GM10248 (cell line): ENCODE measurements at regions of chr22 and their contacts with region 1.

Region 1: DNA sequence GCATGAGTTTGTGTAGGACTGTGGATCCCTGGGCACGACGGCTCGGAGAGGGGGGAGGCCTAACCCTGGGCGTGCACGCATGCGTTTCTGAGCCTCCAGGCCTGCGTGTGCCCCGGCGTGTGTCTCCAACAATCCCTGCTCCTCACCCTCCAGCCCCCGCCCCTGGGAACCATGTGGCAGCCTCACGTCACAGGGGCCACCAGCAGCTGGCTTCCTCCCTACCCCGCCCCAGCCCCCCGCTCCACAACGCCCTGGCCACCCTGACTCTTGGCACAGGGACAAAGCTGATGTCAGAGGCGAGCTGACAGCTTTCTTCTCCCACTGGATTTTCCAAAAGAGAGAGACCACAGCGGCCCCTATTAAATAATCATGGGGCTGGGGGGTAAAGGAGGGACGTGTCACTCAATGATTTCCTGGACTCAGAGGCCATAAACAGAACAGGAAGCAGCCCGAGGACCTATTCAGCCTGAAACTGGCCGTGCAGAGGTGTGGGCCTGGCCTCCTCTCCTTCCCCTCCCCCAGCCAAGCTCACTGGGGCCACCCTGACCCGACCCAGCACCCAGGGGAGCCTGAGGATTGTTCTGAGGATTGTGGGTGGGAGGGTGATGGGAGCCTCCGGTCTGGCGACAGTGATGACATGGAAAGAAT is 6.8 kb upstream of the LIF start:
- DNase-seq: no peak
- CTCF ChIP-seq: no peak

Region 2: GRCh38 chr22:30104501-30105156 is 148.7 kb before region 1 on chr22:
- CTCF ChIA-PET with region 1: interaction called, 101 read pairs
- POLR2A ChIA-PET with region 1: no interaction called
- DNase-seq: no peak
- CTCF ChIP-seq: no peak

Region 3: GRCh38 chr22:30116362-30117117 is 136.8 kb before region 1 on chr22:
- CTCF ChIA-PET with region 1: interaction called, 11 read pairs
- POLR2A ChIA-PET with region 1: no interaction called
- DNase-seq: no peak
- CTCF ChIP-seq: no peak